ENCODE measurements at regions of chr3 and their contacts with region 1.

Region 1: GRCh38 chr3:182212479-182213076 is 500.9 kb downstream of the SOX2 start:
- DNase-seq: no peak
- CTCF ChIP-seq: no peak

Region 2: DNA sequence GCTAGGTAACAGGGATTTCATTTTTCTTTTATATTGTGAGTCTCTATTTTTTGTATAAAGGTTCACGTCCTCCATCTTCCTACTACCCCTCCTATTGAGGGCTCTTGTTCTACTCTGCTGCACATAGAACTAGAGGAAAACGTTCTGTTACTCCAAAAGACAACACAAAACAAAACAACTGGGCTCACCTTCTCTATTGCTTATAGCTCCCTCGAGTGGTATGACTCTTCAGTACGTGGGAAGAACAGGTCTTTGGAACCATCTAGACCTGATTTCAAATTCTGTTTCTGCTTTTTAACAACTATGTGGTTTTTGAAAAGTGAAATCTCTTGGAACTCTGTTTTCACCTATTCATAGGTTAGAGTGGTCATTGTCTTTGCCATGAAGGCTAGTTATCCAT is 14.4 kb after region 1 on chr3:
- CTCF ChIA-PET with region 1: interaction called, 13 read pairs
- POLR2A ChIA-PET with region 1: no interaction called
- DNase-seq: no peak
- CTCF ChIP-seq: no peak

Measured in GM10248 (cell line).